HEK293 (cell line): ENCODE measurements at regions of chr19 and their contacts with region 1.

Region 1: DNA sequence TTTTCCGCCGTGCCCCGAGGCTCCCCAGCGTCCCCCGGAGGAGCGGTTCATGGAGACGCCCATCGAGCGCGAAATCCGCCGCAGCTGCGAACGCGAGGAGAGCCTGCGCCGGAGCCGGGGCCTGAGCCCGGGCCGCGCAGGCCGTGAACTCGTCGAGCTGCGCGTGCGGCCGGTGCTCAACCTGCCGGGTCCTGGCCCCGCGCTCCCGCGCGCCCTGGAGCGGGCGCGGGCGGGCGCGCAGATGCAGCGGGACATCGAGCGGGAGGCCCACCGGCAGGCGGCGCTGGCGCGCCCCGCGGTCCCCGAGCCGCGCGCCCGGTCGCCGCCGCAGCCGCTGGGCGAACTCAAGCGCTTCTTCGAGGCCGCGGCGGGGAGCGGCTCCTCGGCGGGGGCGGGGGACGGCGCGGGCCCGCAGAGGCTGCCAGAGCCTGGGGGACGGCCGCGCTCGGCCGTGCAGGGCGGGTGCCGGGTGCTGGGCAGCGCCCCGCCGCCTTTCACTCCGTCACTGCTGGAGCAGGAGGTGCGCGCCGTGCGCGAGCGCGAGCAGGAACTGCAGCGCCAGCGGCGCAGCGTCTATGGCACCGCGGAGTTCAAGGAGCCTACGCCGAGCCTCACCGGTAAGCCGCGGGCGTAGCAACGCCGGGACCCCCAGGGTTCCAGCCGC is 807 bp downstream of the MISP3 start:
- H3K4me3 ChIP-seq: peak overlapping the region; percentile 57
- H3K27ac ChIP-seq: peak overlapping the region; percentile 44; the same call in 1 of the 2 replicates
- H3K4me1 ChIP-seq: no peaks in the 10 kb centered on the region
- CTCF ChIP-seq: 0 out of 2 replicates have a peak, but pooled peaks have one; percentile 10

Region 2: DNA sequence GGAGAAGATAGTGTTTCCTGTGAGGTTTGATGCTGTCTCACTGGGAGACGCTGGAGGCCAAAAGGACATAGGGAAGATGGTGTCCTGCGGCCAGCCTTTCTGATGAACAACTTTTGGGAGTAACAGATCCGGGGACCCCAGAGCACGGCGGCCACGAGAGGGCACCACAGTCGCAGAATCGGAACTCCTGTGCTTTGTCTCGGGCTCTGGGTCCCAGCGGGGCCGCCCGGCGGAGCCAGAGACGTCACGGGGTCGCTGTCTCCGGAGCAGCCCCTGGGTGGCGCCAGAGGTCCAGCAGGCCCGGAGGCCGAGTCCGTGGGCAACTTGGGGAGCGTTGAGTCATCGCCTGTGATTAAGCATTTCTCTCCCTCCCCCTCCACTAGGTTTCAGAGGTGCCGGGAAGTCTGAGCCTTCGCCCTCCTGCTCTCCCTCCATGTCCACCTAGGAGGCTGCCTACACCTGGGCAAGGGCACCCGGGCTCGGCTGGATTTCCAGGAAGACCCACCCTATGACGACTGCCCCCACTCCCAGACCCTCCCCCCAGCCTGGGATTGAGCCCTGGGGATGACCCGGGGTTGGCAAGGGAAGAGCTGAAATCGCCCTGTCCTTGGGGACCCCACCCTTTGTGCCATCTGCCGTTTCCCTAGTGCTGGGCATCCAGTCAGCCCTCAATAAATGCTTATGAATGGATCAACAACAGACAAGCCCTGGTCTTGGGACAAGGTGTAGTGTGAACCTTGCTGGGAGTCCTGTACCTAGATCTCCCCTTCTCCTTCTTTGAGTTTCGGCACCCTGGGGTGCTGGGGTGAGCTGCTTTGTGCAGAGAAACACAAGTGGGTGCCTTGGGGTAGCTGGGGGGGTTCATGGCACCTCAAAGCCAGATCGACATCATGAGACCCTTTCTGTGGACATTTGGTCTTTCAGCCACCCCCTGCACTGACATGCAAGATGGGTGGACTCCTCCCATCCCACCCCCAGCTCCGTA is 193.0 kb before region 1 on chr19:
- CTCF ChIA-PET with region 1: interaction called, 54 read pairs
- POLR2A ChIA-PET with region 1: interaction called, 3 read pairs
- H3K4me3 ChIP-seq: peak overlapping the region; percentile 32
- H3K27ac ChIP-seq: peak overlapping the region; percentile 13; the same call in 1 of the 2 replicates
- H3K4me1 ChIP-seq: 0 out of 2 replicates have a peak, but pooled peaks cover 2% of the 10 kb centered on the region
- CTCF ChIP-seq: peak; percentile 99

Region 3: DNA sequence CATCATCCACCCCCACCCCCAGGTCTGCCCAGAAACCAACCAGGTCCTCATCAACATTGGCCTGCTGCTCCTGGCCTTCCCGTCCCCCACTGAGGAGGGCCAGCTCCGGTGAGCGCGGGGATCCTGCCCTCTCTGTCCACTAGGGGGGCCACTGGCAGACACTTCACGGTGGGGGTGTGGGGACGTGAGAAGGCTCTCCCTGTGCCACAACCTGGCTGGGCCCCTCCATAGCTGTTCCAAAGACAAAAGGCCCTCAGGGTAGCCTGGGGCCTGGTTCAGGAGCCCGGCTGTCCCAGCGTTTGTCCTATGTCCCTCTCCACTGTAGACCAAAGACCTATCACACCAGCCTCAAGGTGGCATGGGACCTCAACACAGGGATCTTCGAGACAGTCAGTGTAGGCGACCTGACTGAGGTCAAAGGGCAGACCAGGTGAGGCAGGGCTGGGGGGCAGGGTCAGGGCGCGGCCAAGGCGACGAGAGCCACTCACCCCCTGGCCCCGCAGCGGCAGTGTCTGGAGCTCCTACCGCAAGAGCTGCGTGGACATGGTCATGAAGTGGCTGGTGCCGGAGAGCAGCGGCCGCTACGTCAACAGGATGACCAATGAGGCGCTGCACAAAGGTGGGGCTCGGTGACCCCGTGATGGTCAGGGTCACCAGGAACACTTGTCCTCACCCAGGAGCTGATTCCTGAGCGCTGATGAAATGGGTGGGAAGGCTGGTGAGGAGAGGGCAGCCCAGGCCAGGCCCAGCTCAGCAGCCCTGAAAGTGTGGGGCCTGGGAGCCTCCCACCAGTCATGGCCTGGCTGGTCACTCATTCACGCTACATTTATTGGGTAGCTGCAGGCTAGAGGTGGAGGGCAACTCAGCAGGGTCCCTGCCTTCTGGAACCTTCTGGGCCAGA is 113.2 kb before region 1 on chr19:
- CTCF ChIA-PET with region 1: no interaction called
- POLR2A ChIA-PET with region 1: no interaction called
- H3K4me3 ChIP-seq: no peak overlapping the region
- H3K27ac ChIP-seq: no peak overlapping the region
- H3K4me1 ChIP-seq: peaks cover 3% of the 10 kb centered on the region; the same call in 1 of the 2 replicates
- CTCF ChIP-seq: 0 out of 2 replicates have a peak, but pooled peaks have one; percentile 57

Region 4: DNA sequence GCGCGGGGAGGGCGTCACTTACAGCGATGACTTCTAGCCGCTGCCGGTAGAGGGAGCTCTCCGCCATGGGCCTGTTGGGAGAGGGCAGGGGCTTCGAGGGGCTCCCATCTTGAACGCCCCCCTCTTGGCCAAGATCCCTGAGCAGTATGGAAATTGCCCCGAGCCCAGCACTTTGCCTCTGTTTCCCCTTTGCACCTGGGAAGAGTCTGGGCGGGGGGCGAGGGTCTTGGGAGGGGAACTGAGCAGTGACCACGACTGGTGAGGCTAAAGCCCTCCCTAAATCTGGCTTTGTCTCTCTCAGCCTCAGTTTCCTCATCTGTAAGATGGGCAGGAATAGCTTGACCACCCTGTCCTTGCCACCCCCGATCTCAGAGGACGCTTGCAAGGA is 14.3 kb before region 1 on chr19:
- CTCF ChIA-PET with region 1: interaction called, 80 read pairs
- POLR2A ChIA-PET with region 1: interaction called, 6 read pairs
- H3K4me3 ChIP-seq: no peak overlapping the region
- H3K27ac ChIP-seq: no peak overlapping the region
- H3K4me1 ChIP-seq: peaks cover 4% of the 10 kb centered on the region
- CTCF ChIP-seq: peak; percentile 69

Region 5: GRCh38 chr19:14120497-14120780 is 47.0 kb after region 1 on chr19:
- CTCF ChIA-PET with region 1: no interaction called
- POLR2A ChIA-PET with region 1: no interaction called
- H3K4me3 ChIP-seq: no peak overlapping the region
- H3K27ac ChIP-seq: no peak overlapping the region
- H3K4me1 ChIP-seq: peaks cover 3% of the 10 kb centered on the region
- CTCF ChIP-seq: no peak